PC-3 (cell line): ENCODE measurements at regions of chr12 and their contacts with region 1.

Region 1: GRCh38 chr12:79547735-79548609 is 142.8 kb downstream of the PAWR start:
- DNase-seq: peak; percentile 91
- ATAC-seq: peak; percentile 22
- H3K4me3 ChIP-seq: peak overlapping the region; percentile 47
- H3K27ac ChIP-seq: peak overlapping the region; percentile 97
- H3K4me1 ChIP-seq: peaks cover 47% of the 10 kb centered on the region
- H3K27me3 ChIP-seq: no peaks in the 10 kb centered on the region
- CTCF ChIP-seq: peak; percentile 96

Region 2: GRCh38 chr12:79162949-79163348 is 385.0 kb before region 1 on chr12:
- CTCF ChIA-PET with region 1: no interaction called
- POLR2A ChIA-PET with region 1: no interaction called
- intact Hi-C with region 1: no loop called
- DNase-seq: no peak
- ATAC-seq: no peak
- H3K4me3 ChIP-seq: no peak overlapping the region
- H3K27ac ChIP-seq: no peak overlapping the region
- H3K4me1 ChIP-seq: peaks cover 12% of the 10 kb centered on the region; the same call in 1 of the 2 replicates
- H3K27me3 ChIP-seq: no peaks in the 10 kb centered on the region
- CTCF ChIP-seq: no peak

Region 3: GRCh38 chr12:79247494-79247893 is 300.5 kb before region 1 on chr12:
- CTCF ChIA-PET with region 1: no interaction called
- POLR2A ChIA-PET with region 1: no interaction called
- intact Hi-C with region 1: no loop called
- DNase-seq: no peak
- ATAC-seq: no peak
- H3K4me3 ChIP-seq: no peak overlapping the region
- H3K27ac ChIP-seq: no peak overlapping the region
- H3K4me1 ChIP-seq: peaks cover 29% of the 10 kb centered on the region
- H3K27me3 ChIP-seq: no peaks in the 10 kb centered on the region
- CTCF ChIP-seq: no peak

Region 4: DNA sequence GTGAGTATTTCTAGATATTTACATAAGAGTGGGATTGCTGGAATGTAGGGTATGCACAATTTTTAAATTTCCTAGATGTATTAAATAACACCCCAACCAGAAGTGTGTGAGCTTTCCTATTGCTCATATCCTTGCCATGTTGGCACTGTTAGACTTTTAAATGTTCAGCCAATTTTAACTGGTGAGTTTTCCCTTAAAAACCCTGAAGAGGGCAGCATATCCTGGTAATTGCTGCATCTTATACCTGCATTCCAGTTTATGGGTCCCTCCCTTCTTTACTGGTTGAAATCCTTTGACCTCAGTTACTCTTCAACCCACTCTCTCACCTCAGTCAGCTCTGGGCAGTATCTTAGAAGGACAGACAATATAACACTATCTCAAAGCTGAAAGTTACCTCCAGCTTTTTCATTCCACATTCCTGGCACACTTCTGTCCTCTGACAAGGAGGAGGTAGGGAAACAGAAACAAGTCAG is 127.8 kb before region 1 on chr12:
- CTCF ChIA-PET with region 1: interaction called, 25 read pairs
- POLR2A ChIA-PET with region 1: interaction called, 17 read pairs
- intact Hi-C with region 1: loop called (anchors 1 kb)
- DNase-seq: peak; percentile 95
- ATAC-seq: peak; percentile 55
- H3K4me3 ChIP-seq: 0 out of 2 replicates have a peak overlapping the region, but pooled peaks have one; percentile 11
- H3K27ac ChIP-seq: peak overlapping the region; percentile 63
- H3K4me1 ChIP-seq: peaks cover 86% of the 10 kb centered on the region
- H3K27me3 ChIP-seq: no peaks in the 10 kb centered on the region
- CTCF ChIP-seq: peak; percentile 89

Region 5: DNA sequence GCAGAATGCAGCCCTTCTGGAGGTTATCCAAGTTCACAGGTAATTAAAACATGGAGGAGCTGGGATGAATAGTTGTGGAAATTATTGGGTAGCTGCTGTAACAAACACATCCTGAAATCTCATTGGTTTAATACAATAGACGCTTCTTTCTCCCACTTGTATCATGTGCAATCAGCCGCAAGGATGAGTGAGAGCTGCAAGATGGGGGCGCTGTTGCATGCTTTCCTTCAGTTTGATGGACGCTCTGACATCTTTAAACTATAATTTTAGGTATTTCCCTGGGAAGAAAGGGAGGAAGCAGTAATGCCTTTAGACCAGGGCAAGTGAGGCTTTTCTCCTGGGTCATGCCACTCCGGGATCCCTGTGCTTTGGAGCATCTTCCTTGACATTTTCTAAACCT is 35.9 kb before region 1 on chr12:
- CTCF ChIA-PET with region 1: interaction called, 4 read pairs
- POLR2A ChIA-PET with region 1: interaction called, 6 read pairs
- intact Hi-C with region 1: loop called (anchors 2 kb)
- DNase-seq: peak; percentile 38
- ATAC-seq: no peak
- H3K4me3 ChIP-seq: no peak overlapping the region
- H3K27ac ChIP-seq: no peak overlapping the region
- H3K4me1 ChIP-seq: no peaks in the 10 kb centered on the region
- H3K27me3 ChIP-seq: no peaks in the 10 kb centered on the region
- CTCF ChIP-seq: peak; percentile 60

Region 6: GRCh38 chr12:79685068-79685467 is 137.1 kb after region 1 on chr12:
- CTCF ChIA-PET with region 1: no interaction called
- POLR2A ChIA-PET with region 1: interaction called, 12 read pairs
- intact Hi-C with region 1: loop called (anchors 1 kb)
- DNase-seq: peak; percentile 95
- ATAC-seq: peak; percentile 70
- H3K4me3 ChIP-seq: peak overlapping the region; percentile 87
- H3K27ac ChIP-seq: peak overlapping the region; percentile 86
- H3K4me1 ChIP-seq: peaks cover 61% of the 10 kb centered on the region
- H3K27me3 ChIP-seq: no peaks in the 10 kb centered on the region
- CTCF ChIP-seq: no peak

Region 7: GRCh38 chr12:79935021-79935623 is 387.1 kb after region 1 on chr12 and contains the start of gene PPP1R12A:
- CTCF ChIA-PET with region 1: no interaction called
- POLR2A ChIA-PET with region 1: no interaction called
- intact Hi-C with region 1: loop called (anchors 10 kb)
- DNase-seq: peak; percentile 98
- ATAC-seq: peak; percentile 88
- H3K4me3 ChIP-seq: peak within 1 kb of the TSS; percentile 95
- H3K27ac ChIP-seq: peak within 1 kb of the TSS; percentile 73
- H3K4me1 ChIP-seq: peaks cover 19% of the 10 kb centered on the region
- H3K27me3 ChIP-seq: no peaks in the 10 kb centered on the region
- CTCF ChIP-seq: no peak
- total RNA-seq, gene PPP1R12A: 43.2 and 67.5 TPM in 2 replicates

Region 8: DNA sequence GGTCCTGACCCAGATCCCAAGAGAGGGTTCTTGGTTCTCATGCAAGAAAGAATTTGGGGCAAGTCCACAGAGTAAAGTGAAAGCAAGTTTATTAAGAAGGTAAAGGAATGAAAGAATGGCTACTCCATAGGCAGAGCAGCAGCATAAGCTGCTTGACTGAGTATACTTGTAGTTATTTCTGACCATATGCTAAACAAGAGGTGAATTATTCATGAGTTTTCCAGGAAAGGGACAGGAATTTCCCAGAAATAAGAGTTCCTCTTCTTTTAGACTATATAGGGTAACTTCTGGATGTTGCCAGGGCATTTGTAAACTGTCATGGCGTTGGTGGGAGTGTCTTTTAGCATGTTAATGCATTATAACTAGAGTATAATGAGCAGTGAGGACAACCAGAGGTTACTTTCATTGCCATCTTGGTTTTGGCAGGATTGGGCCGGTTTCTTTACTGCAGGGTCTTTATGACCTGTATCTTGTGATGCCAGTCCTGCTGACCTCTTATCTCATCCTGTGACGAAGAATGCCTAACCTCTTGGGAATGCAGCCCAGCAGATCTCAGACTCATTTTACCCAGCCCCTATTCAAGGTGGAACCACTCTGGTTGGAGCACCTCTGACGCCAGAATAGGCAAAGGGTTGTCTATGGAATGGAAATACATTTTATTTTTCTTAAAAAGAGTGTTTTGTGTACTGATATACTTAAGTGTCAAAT is 665.1 kb after region 1 on chr12:
- CTCF ChIA-PET with region 1: no interaction called
- POLR2A ChIA-PET with region 1: no interaction called
- intact Hi-C with region 1: no loop called
- DNase-seq: no peak
- ATAC-seq: no peak
- H3K4me3 ChIP-seq: no peak overlapping the region
- H3K27ac ChIP-seq: no peak overlapping the region
- H3K4me1 ChIP-seq: no peaks in the 10 kb centered on the region
- H3K27me3 ChIP-seq: no peaks in the 10 kb centered on the region
- CTCF ChIP-seq: no peak